Endothelial cell of umbilical vein (primary cell): ENCODE measurements at regions of chr9 and their contacts with region 1.

Region 1: GRCh38 chr9:85702726-85703289 is 38.9 kb downstream of the AGTPBP1 start:
- DNase-seq: no peak
- H3K4me3 ChIP-seq: no peak overlapping the region
- H3K27ac ChIP-seq: no peak overlapping the region
- H3K4me1 ChIP-seq: no peaks in the 10 kb centered on the region
- H3K27me3 ChIP-seq: no peaks in the 10 kb centered on the region
- CTCF ChIP-seq: no peak
- POLR2A ChIP-seq: no peak

Region 2: GRCh38 chr9:85676790-85677189 is 26.0 kb before region 1 on chr9:
- CTCF ChIA-PET with region 1: interaction called, 12 read pairs
- POLR2A ChIA-PET with region 1: no interaction called
- dilution Hi-C with region 1: no loop called
- intact Hi-C with region 1: loop called (anchors 2 kb)
- DNase-seq: no peak
- H3K4me3 ChIP-seq: no peak overlapping the region
- H3K27ac ChIP-seq: no peak overlapping the region
- H3K4me1 ChIP-seq: no peaks in the 10 kb centered on the region
- H3K27me3 ChIP-seq: no peaks in the 10 kb centered on the region
- CTCF ChIP-seq: no peak
- POLR2A ChIP-seq: no peak

Region 3: DNA sequence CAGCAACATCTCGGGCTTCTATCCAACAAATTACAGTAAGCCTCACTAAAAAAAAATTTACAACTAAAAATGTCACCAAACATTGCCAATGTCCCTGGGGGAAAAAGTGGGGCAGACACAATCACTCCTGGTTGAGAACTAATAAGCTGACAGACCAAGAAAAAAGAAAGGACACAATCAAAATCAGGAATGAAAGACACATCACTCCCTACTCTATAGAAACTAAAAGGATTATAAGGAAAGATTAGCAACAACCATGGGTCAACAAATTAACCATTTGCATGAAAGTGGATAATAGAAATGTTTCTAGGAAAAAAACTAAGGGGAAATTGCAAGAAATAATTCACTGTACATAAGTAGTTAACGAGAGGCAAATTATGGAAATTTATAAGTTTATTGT is 14.4 kb before region 1 on chr9:
- CTCF ChIA-PET with region 1: interaction called, 14 read pairs
- POLR2A ChIA-PET with region 1: no interaction called
- dilution Hi-C with region 1: no loop called
- intact Hi-C with region 1: no loop called
- DNase-seq: no peak
- H3K4me3 ChIP-seq: no peak overlapping the region
- H3K27ac ChIP-seq: no peak overlapping the region
- H3K4me1 ChIP-seq: no peaks in the 10 kb centered on the region
- H3K27me3 ChIP-seq: no peaks in the 10 kb centered on the region
- CTCF ChIP-seq: no peak
- POLR2A ChIP-seq: no peak

Region 4: DNA sequence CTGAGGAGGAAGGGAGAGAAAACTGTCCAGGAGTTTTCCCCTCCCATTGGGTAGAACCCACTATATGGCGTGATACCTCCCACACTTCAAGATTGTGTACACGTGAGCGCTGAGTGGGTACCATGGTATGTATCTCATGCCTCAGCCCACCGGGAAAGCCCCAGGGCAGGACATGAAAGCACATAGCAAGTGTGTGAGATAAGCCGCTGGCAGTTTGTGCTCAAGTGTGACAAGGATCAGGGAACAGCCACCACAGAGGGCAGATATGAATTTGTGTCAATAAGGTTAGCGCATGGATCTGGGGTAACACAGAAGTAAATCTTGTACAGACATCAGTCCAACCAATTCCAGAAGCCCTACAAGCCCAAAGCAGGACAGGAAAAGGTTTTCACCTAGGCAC is 195.5 kb after region 1 on chr9:
- CTCF ChIA-PET with region 1: no interaction called
- POLR2A ChIA-PET with region 1: no interaction called
- dilution Hi-C with region 1: no loop called
- intact Hi-C with region 1: no loop called
- DNase-seq: no peak
- H3K4me3 ChIP-seq: no peak overlapping the region
- H3K27ac ChIP-seq: no peak overlapping the region
- H3K4me1 ChIP-seq: no peaks in the 10 kb centered on the region
- H3K27me3 ChIP-seq: peaks cover 0 to 2% of the 10 kb centered on the region in 2 experiments
- CTCF ChIP-seq: no peak
- POLR2A ChIP-seq: no peak

Region 5: DNA sequence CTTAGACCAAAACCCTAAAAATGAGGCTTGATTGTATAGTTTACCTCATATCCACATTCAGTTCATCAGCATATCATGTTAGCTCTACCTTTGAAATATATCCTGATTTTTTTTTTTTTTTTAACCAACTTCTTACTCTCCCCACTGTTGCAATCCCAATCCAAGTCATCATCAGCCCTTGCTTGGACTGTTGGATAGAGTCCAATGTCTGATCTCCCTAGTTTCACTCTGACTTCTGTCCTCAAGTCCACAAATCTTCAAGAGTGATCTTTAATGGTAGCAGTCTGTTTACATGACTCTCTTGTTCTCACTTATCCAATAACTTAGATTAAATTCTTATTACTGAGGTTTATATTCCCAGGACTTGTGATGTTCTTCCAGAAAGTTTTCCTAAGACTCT is 268.9 kb after region 1 on chr9:
- CTCF ChIA-PET with region 1: no interaction called
- POLR2A ChIA-PET with region 1: no interaction called
- dilution Hi-C with region 1: no loop called
- intact Hi-C with region 1: no loop called
- DNase-seq: no peak
- H3K4me3 ChIP-seq: no peak overlapping the region
- H3K27ac ChIP-seq: no peak overlapping the region
- H3K4me1 ChIP-seq: no peaks in the 10 kb centered on the region
- H3K27me3 ChIP-seq: no peaks in the 10 kb centered on the region
- CTCF ChIP-seq: no peak
- POLR2A ChIP-seq: no peak